Naive thymus-derived CD4-positive, alpha-beta T cell (primary cell): ENCODE measurements at regions of chr10 and their contacts with region 1.

Region 1: GRCh38 chr10:86512137-86512536 is 9.5 kb downstream of the WAPL start:
- DNase-seq: no peak
- ATAC-seq: no peak
- H3K4me3 ChIP-seq: no peak overlapping the region
- H3K4me3 Mint-ChIP-seq: peak overlapping the region in 8 of 10 donors; percentile 14 to 72 (median 46)
- H3K27ac ChIP-seq: no peak overlapping the region
- H3K27ac Mint-ChIP-seq: peak overlapping the region in 8 of 9 donors; percentile 1 to 60 (median 20)
- H3K4me1 ChIP-seq: peaks cover 18 to 29% of the 10 kb centered on the region in 2 donors
- H3K4me1 Mint-ChIP-seq: peaks cover 41 to 65% (median 50%) of the 10 kb centered on the region in 7 donors
- H3K27me3 ChIP-seq: no peaks in the 10 kb centered on the region
- H3K27me3 Mint-ChIP-seq: no peaks in the 10 kb centered on the region

Region 2: DNA sequence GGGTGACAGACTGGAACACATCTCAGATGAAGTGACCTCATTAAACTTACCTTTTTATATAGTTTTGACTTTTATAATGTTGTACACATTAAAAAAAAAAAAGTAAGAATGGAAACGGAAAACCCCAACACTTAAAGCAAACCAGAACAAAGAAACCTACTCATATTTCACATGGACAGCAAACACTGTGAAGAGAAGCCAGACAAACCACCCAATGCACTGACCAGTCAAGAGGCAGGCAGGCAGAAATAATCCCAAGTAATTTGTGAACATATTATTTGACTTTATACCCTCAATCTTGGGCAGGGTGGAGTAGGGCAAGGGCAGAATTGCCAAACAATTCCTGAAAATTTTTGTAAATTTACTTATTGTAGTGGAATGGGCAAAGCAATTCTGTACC is 30.4 kb before region 1 on chr10:
- CTCF ChIA-PET with region 1: no interaction called
- POLR2A ChIA-PET with region 1: no interaction called
- intact Hi-C with region 1: loop called in 1 of 2 experiments (anchors 5 kb)
- DNase-seq: no peak
- ATAC-seq: no peak
- H3K4me3 ChIP-seq: no peak overlapping the region
- H3K4me3 Mint-ChIP-seq: no peak overlapping the region
- H3K27ac ChIP-seq: no peak overlapping the region
- H3K27ac Mint-ChIP-seq: peak overlapping the region in 2 of 9 donors; percentile 13 to 22
- H3K4me1 ChIP-seq: no peaks in the 10 kb centered on the region
- H3K4me1 Mint-ChIP-seq: peaks cover 8 to 37% (median 20%) of the 10 kb centered on the region in 7 donors
- H3K27me3 ChIP-seq: no peaks in the 10 kb centered on the region
- H3K27me3 Mint-ChIP-seq: no peaks in the 10 kb centered on the region